Activated CD4-positive, alpha-beta memory T cell treated with anti-CD3 and anti-CD28 coated beads, Interleukin-2, amount 10 ng/mL, durations not matched to agents 7 days and 5 days (primary cell): ENCODE measurements at regions of chr1 and their contacts with region 1.

Region 1: GRCh38 chr1:39408641-39409054 is 82.8 kb upstream of the BMP8A start:
- DNase-seq: peak; percentile 83
- H3K4me3 Mint-ChIP-seq: peak overlapping the region; percentile 81
- H3K27ac Mint-ChIP-seq: no peak overlapping the region
- H3K4me1 Mint-ChIP-seq: peaks cover 57% of the 10 kb centered on the region
- H3K27me3 Mint-ChIP-seq: no peaks in the 10 kb centered on the region

Region 2: DNA sequence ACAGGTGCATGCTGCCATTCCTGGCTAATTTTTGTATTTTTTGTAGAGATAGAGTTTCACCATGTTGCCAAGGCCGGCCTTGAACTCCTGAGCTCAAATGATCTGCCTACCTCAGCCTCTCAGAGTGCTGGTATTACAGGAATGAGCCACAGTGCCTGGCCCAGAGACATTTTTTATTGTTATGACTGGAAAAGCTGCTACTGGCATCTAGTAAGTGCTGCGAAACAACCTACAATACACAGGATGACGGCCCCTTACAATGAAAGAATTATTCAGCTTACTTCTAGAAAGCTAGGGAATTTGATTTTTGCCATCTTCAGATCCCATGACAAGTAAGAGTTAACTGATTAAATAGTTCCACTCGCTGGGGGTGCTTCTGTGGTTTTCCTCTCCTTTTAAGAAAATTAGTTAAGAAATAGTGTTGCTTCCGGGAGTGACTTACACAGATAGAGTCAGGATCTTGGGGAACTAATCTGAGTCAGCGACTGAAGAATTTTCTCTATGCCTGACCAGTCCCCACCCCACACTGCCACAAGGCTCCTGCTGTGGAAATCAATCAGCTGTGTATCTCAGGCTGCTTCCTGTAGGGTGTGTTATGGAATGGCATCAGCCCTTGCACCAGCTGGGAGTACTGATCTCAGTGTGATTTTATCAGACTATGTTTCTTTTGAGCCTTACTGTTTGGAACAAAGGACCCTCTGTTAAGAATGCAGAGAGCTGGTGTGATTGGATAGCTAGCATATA is 10.2 kb before region 1 on chr1:
- CTCF ChIA-PET with region 1: interaction called, 14 read pairs
- POLR2A ChIA-PET with region 1: interaction called, 14 read pairs
- DNase-seq: peak; percentile 26
- H3K4me3 Mint-ChIP-seq: no peak overlapping the region
- H3K27ac Mint-ChIP-seq: peak overlapping the region; percentile 65
- H3K4me1 Mint-ChIP-seq: peaks cover 57% of the 10 kb centered on the region
- H3K27me3 Mint-ChIP-seq: no peaks in the 10 kb centered on the region

Region 3: GRCh38 chr1:39425151-39425550 is 16.5 kb after region 1 on chr1:
- CTCF ChIA-PET with region 1: interaction called, 14 read pairs
- POLR2A ChIA-PET with region 1: no interaction called
- DNase-seq: no peak
- H3K4me3 Mint-ChIP-seq: no peak overlapping the region
- H3K27ac Mint-ChIP-seq: no peak overlapping the region
- H3K4me1 Mint-ChIP-seq: peaks cover 13% of the 10 kb centered on the region
- H3K27me3 Mint-ChIP-seq: no peaks in the 10 kb centered on the region

Region 4: GRCh38 chr1:39491146-39491921 is 82.7 kb after region 1 on chr1 and contains the start of gene BMP8A:
- CTCF ChIA-PET with region 1: no interaction called
- POLR2A ChIA-PET with region 1: no interaction called
- DNase-seq: peak; percentile 74
- H3K4me3 Mint-ChIP-seq: peak within 1 kb of the TSS; percentile 51
- H3K27ac Mint-ChIP-seq: no peak within 1 kb of the TSS
- H3K4me1 Mint-ChIP-seq: peaks cover 9% of the 10 kb centered on the region
- H3K27me3 Mint-ChIP-seq: peaks cover 27% of the 10 kb centered on the region
- total RNA-seq, gene BMP8A: not detected

Region 5: DNA sequence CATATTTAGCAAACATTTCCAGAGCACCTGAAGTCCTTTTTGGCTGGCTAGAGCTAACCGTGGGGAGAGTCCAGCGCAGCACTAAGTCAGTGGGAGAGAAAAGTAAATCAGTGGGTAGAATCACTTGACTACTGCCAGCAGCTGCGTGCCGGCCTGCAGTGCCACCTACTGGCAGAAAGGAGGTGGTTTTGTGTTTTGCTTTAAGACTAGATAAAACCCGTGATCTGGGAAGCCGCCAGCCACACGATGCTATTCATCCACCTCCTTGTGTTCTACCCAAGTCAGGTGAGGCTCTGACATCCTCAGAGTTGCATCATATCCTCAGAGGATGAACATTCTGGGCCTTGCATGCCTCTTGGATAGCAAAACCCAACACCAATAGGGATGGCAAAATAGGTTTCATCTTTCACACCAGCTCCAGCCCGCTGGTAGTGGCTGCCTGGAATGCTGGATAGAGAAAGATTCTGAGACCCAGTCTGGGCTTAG is 244.9 kb after region 1 on chr1:
- CTCF ChIA-PET with region 1: no interaction called
- POLR2A ChIA-PET with region 1: no interaction called
- DNase-seq: peak; percentile 80
- H3K4me3 Mint-ChIP-seq: no peak overlapping the region
- H3K27ac Mint-ChIP-seq: no peak overlapping the region
- H3K4me1 Mint-ChIP-seq: peaks cover 12% of the 10 kb centered on the region
- H3K27me3 Mint-ChIP-seq: peaks cover 7% of the 10 kb centered on the region